ENCODE measurements at regions of chr14 and their contacts with region 1.

Region 1: GRCh38 chr14:63437953-63438757 is 105.0 kb downstream of the PPP2R5E start:
- DNase-seq: peak; percentile 98
- ATAC-seq: peak; percentile 96
- H3K4me3 ChIP-seq: peak overlapping the region; percentile 56
- H3K27ac ChIP-seq: peak overlapping the region; percentile 80
- H3K4me1 ChIP-seq: peaks cover 40% of the 10 kb centered on the region
- H3K27me3 ChIP-seq: no peaks in the 10 kb centered on the region
- CTCF ChIP-seq: peak; percentile 56

Region 2: GRCh38 chr14:63401646-63402045 is 36.5 kb before region 1 on chr14:
- CTCF ChIA-PET with region 1: no interaction called
- POLR2A ChIA-PET with region 1: interaction called, 5 read pairs
- intact Hi-C with region 1: loop called (anchors 5 kb)
- DNase-seq: no peak
- ATAC-seq: no peak
- H3K4me3 ChIP-seq: no peak overlapping the region
- H3K27ac ChIP-seq: no peak overlapping the region
- H3K4me1 ChIP-seq: peaks cover 13% of the 10 kb centered on the region
- H3K27me3 ChIP-seq: no peaks in the 10 kb centered on the region
- CTCF ChIP-seq: no peak

Region 3: GRCh38 chr14:63470962-63471793 is 33.0 kb after region 1 on chr14:
- CTCF ChIA-PET with region 1: no interaction called
- POLR2A ChIA-PET with region 1: no interaction called
- intact Hi-C with region 1: loop called (anchors 1 kb)
- DNase-seq: peak; percentile 96
- ATAC-seq: peak; percentile 87
- H3K4me3 ChIP-seq: peak overlapping the region; percentile 25; the same call in 1 of the 2 replicates
- H3K27ac ChIP-seq: peak overlapping the region; percentile 89
- H3K4me1 ChIP-seq: peaks cover 55% of the 10 kb centered on the region
- H3K27me3 ChIP-seq: no peaks in the 10 kb centered on the region
- CTCF ChIP-seq: no peak

Measured in PC-3 (cell line).